Activated naive CD8-positive, alpha-beta T cell treated with anti-CD3 and anti-CD28 coated beads, Interleukin-2, amount 10 ng/mL, durations not matched to agents 7 days and 5 days (primary cell): ENCODE measurements at regions of chr1 and their contacts with region 1.

Region 1: GRCh38 chr1:155967341-155968050 is 10.9 kb downstream of the ARHGEF2 start:
- DNase-seq: no peak
- ATAC-seq: peak; percentile 55
- H3K4me3 Mint-ChIP-seq: peak overlapping the region; percentile 79
- H3K27ac Mint-ChIP-seq: peak overlapping the region; percentile 96
- H3K4me1 Mint-ChIP-seq: peaks cover 65% of the 10 kb centered on the region
- H3K27me3 Mint-ChIP-seq: no peaks in the 10 kb centered on the region

Region 2: DNA sequence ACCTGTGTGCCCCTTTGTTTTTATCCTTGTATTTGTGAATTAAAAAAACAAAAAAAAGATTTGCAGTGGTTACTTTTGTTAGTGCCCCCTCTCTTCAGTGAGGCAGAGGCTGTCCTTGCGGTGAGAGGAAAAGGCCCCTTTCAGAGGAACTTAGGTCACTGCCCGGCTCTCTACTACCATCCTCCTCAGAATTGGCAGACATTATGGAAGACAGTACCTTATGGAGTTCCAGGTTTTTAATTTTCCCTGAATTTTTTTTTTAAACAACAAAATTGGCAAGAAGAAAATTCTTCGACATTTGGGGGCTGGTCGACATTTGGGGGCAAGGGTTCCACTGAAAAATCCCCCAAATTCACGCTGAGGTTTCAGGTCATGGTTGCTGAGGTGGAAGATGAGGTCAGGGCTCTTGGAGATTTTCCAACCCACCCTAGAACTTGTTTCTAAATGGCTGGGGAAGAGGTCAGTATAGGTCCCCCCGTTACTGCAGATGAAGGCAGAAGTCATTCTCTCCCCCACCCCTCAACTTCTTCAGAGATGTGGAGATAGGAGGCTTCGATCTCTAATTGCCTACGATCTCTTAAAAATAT is 20.8 kb before region 1 on chr1:
- POLR2A ChIA-PET with region 1: interaction called, 17 read pairs
- DNase-seq: no peak
- ATAC-seq: no peak
- H3K4me3 Mint-ChIP-seq: peak overlapping the region; percentile 71
- H3K27ac Mint-ChIP-seq: peak overlapping the region; percentile 91
- H3K4me1 Mint-ChIP-seq: peaks cover 35% of the 10 kb centered on the region
- H3K27me3 Mint-ChIP-seq: no peaks in the 10 kb centered on the region

Region 3: DNA sequence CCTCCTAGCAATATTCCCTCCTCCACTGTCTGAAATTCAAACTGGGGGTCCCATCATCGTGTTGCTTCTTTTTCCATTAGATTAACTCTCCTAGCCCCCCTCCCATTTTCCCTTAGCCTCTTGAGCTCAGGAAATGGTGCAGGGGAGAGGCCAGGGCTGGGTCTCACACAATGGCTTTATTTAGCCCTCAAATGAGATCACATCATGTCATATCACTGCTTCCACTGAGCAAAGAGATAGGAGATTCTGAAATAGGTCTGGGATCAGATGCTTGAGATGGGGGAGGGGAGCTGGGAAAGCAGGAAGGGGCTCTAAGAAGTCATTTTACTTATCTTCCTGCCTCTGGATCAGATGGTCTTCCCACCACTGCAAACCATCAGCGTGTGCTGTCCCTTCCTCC is 28.7 kb after region 1 on chr1:
- POLR2A ChIA-PET with region 1: no interaction called
- DNase-seq: no peak
- ATAC-seq: no peak
- H3K4me3 Mint-ChIP-seq: no peak overlapping the region
- H3K27ac Mint-ChIP-seq: no peak overlapping the region
- H3K4me1 Mint-ChIP-seq: peaks cover 9% of the 10 kb centered on the region
- H3K27me3 Mint-ChIP-seq: peaks cover 3% of the 10 kb centered on the region

Region 4: GRCh38 chr1:156012051-156012817 is 44.7 kb after region 1 on chr1:
- POLR2A ChIA-PET with region 1: no interaction called
- DNase-seq: no peak
- ATAC-seq: no peak
- H3K4me3 Mint-ChIP-seq: no peak overlapping the region
- H3K27ac Mint-ChIP-seq: no peak overlapping the region
- H3K4me1 Mint-ChIP-seq: peaks cover 17% of the 10 kb centered on the region
- H3K27me3 Mint-ChIP-seq: no peaks in the 10 kb centered on the region